CD14-positive monocyte (primary cell): ENCODE measurements at regions of chr6 and their contacts with region 1.

Region 1: DNA sequence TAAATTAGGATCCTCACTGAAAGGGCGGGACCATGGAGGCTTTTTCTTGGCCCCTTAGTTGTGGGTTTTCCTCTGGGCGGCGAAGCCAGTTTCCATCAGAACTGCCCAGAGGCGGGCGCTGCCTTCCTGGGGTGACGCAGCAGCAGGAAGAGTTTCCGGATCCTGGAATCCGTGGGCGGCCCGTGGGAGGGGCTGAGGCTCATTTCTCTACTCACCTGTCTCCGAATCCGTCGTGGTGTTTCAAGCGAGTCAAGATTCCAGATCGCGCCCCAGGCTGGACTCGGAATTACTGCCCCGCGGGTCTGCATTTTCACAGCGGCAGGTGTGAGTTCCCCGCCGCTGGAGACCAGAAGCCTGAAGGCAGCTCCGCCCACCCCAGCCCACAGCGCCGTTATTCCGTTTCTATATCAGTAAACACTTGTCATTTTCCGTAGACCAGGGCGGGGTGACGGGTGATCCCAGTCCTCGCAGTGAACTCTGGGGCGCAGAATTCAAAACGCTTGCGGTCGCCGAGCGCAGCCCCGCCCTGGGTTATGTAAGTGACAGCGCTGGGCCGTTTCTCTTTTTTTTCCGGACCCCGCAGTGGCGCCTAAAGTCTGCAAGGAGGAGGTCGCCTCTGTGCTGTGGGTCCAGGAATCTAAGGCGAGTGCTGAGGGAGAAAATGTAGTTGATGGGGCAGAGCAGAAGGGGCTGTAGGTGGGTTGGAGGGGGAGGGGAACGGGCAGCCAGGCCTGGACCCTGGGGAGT is 27.2 kb upstream of the POU5F1 start:
- DNase-seq: peak; percentile 88 to 91 (median 91)
- H3K4me3 ChIP-seq: peak overlapping the region; percentile 76 to 91 (median 88)
- H3K4me3 Mint-ChIP-seq: peak overlapping the region; percentile 95
- H3K27ac ChIP-seq: peak overlapping the region; percentile 95 to 98
- H3K27ac Mint-ChIP-seq: peak overlapping the region; percentile 97 to 100 (median 99)
- H3K4me1 ChIP-seq: peaks cover 45 to 48% of the 10 kb centered on the region in 2 donors
- H3K4me1 Mint-ChIP-seq: peaks cover 60% of the 10 kb centered on the region
- H3K27me3 ChIP-seq: no peaks in the 10 kb centered on the region
- H3K27me3 Mint-ChIP-seq: peaks cover 0 to 4% (median 0%) of the 10 kb centered on the region in 3 donors
- CTCF ChIP-seq: no peak

Region 2: GRCh38 chr6:31139599-31139998 is 58.1 kb before region 1 on chr6:
- intact Hi-C with region 1: loop called (anchors 1 to 2 kb)
- DNase-seq: no peak
- H3K4me3 ChIP-seq: no peak overlapping the region
- H3K4me3 Mint-ChIP-seq: no peak overlapping the region
- H3K27ac ChIP-seq: no peak overlapping the region
- H3K27ac Mint-ChIP-seq: no peak overlapping the region
- H3K4me1 ChIP-seq: peaks cover 0 to 6% of the 10 kb centered on the region in 2 donors
- H3K4me1 Mint-ChIP-seq: peaks cover 6% of the 10 kb centered on the region
- H3K27me3 ChIP-seq: peaks cover 0 to 3% of the 10 kb centered on the region in 2 donors
- H3K27me3 Mint-ChIP-seq: peaks cover 0 to 13% (median 2%) of the 10 kb centered on the region in 3 donors
- CTCF ChIP-seq: no peak

Region 3: GRCh38 chr6:31366693-31367470 is 169.2 kb after region 1 on chr6:
- intact Hi-C with region 1: loop called (anchors 2 kb)
- DNase-seq: peak; percentile 87 to 88 (median 88)
- H3K4me3 ChIP-seq: peak overlapping the region; percentile 1 to 65 (median 9)
- H3K4me3 Mint-ChIP-seq: peak overlapping the region; percentile 76 to 90
- H3K27ac ChIP-seq: no peak overlapping the region
- H3K27ac Mint-ChIP-seq: peak overlapping the region in 2 of 7 donors; percentile 46 to 61
- H3K4me1 ChIP-seq: peaks cover 22 to 27% of the 10 kb centered on the region in 2 donors
- H3K4me1 Mint-ChIP-seq: peaks cover 28% of the 10 kb centered on the region
- H3K27me3 ChIP-seq: peaks cover 12 to 13% of the 10 kb centered on the region in 2 donors
- H3K27me3 Mint-ChIP-seq: peaks cover 20 to 48% (median 25%) of the 10 kb centered on the region in 3 donors
- CTCF ChIP-seq: peak; percentile 86